Activated CD8-positive, alpha-beta T cell treated with anti-CD3 and anti-CD28 coated beads for 36 hours (primary cell): ENCODE measurements at regions of chr9 and their contacts with region 1.

Region 1: DNA sequence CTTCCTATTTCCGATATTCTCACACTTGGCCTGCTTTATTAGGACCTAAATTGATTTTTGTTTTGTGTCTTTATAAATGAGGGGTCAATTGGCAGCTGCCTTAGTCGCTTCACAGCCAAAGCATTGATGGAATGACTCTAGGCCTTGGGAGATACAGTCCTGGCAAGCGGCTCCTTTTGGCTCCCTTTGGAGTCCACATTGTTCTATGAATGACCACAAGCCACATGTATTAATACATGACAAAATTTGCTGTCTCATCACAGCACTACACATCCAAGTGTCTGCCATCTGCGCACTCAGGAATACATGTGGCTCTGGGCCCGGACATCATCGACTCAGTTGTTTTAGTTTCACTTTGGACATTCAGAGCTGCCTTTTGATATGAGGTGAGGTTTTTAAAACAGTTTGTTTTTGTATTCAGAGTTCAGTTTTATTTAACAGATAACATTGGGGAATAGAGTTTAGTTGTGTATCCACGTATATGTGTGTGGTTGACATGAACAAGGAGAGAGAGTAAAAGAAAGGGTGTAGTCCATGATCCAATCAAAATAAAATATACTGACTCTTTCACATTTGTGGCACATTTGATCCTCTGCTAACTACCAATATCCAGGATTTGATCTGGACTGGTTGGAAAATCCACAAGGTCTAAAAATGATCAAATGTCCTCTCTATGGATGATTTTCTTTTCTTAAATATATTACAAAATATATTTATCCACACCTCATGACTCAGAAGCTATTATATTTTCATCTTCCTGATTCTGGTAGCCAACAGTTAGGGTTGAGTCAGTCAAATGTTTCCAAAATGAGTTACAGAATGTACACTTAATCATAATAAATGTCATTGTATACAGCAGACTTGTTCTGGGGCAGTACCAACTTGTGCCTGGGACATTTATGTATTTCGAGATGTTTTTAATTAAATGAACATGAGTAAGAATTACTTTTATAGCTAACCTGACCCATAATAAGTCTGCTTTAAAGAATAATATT is 114.0 kb upstream of the MTAP start:
- DNase-seq: peak; percentile 7
- ATAC-seq: peak; percentile 35
- H3K4me3 Mint-ChIP-seq: peak overlapping the region; percentile 10
- H3K27ac Mint-ChIP-seq: peak overlapping the region; percentile 75
- H3K4me1 Mint-ChIP-seq: peaks cover 56% of the 10 kb centered on the region
- H3K27me3 Mint-ChIP-seq: no peaks in the 10 kb centered on the region
- CTCF ChIP-seq: no peak

Region 2: GRCh38 chr9:21465859-21466518 is 222.4 kb before region 1 on chr9:
- CTCF ChIA-PET with region 1: interaction called, 3 read pairs
- POLR2A ChIA-PET with region 1: no interaction called
- intact Hi-C with region 1: loop called (anchors 10 kb)
- DNase-seq: no peak
- ATAC-seq: peak; percentile 77
- H3K4me3 Mint-ChIP-seq: no peak overlapping the region
- H3K27ac Mint-ChIP-seq: no peak overlapping the region
- H3K4me1 Mint-ChIP-seq: no peaks in the 10 kb centered on the region
- H3K27me3 Mint-ChIP-seq: no peaks in the 10 kb centered on the region
- CTCF ChIP-seq: peak; percentile 73

Region 3: GRCh38 chr9:21634951-21635350 is 53.5 kb before region 1 on chr9:
- CTCF ChIA-PET with region 1: no interaction called
- POLR2A ChIA-PET with region 1: no interaction called
- intact Hi-C with region 1: no loop called
- DNase-seq: no peak
- ATAC-seq: no peak
- H3K4me3 Mint-ChIP-seq: no peak overlapping the region
- H3K27ac Mint-ChIP-seq: no peak overlapping the region
- H3K4me1 Mint-ChIP-seq: no peaks in the 10 kb centered on the region
- H3K27me3 Mint-ChIP-seq: no peaks in the 10 kb centered on the region
- CTCF ChIP-seq: no peak

Region 4: DNA sequence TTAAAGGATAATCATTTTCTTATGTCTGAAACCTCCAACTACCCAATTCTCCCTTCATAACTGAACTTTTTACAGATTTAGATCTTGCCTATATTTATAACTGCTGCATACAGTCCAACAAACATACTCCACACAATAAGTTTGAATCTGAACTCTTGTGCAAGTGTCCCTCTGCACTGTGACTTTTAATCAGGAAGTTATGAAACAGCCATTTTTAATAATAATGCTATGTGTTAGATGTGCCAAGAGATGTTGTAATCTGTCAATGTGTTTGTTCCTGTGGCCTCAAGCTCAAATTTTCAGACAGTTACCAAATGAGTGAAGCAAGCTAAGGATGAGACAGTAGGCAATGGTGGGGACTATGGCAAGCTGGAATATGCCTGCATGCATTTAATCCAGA is 56.4 kb after region 1 on chr9:
- CTCF ChIA-PET with region 1: no interaction called
- POLR2A ChIA-PET with region 1: no interaction called
- intact Hi-C with region 1: no loop called
- DNase-seq: no peak
- ATAC-seq: no peak
- H3K4me3 Mint-ChIP-seq: no peak overlapping the region
- H3K27ac Mint-ChIP-seq: no peak overlapping the region
- H3K4me1 Mint-ChIP-seq: no peaks in the 10 kb centered on the region
- H3K27me3 Mint-ChIP-seq: peaks cover 10% of the 10 kb centered on the region
- CTCF ChIP-seq: no peak